ENCODE measurements at regions of chr9 and their contacts with region 1.

Region 1: GRCh38 chr9:128412120-128412790 is 8.4 kb upstream of the CERCAM start:
- DNase-seq: no peak
- ATAC-seq: peak; percentile 38; the same call in 1 of the 2 replicates
- H3K4me3 ChIP-seq: no peak overlapping the region
- H3K27ac ChIP-seq: no peak overlapping the region
- H3K4me1 ChIP-seq: peaks cover 4% of the 10 kb centered on the region; the same call in 1 of the 2 replicates
- H3K27me3 ChIP-seq: no peaks in the 10 kb centered on the region
- CTCF ChIP-seq: peak; percentile 80

Region 2: DNA sequence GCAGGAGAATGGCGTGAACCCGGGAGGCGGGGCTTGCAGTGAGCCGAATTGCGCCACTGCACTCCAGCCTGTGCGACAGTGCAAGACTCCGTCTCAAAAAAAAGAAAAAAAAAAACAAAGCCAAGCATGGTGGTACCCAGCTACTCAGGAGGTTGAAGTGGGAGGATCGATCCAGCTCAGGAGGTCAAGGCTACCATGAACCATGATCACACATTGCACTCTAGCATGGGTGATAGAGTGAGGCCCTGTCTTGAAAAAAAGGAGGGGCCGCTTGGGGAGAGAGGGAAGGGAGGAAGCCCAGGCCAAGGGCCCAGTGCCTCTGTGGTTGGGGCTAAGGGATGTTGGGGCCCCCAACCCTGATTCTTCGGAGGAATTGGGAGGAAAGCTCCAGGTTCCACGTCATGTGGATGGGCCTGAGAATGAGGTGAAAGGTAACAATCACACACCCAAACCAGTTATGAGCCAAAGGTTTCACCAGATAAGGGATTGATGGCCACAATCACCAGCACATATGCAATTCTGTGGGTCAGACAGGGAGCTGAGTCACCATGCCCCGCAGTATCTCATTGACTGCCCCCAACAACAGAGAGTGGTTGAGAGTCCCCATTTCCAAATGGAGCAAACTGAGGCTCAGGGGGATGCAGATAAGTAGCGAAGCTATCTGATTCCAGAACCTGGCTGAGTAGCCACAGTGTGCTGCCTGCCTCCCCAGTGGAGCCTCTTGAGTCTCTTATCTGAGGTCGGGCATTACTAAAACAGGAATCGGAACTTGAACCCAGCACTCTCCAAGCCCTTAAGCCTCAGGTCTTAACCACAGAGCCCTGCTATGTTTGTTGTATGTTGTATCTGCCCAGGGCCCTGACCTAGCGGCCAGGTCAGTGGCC is 115.7 kb before region 1 on chr9:
- CTCF ChIA-PET with region 1: interaction called, 5 read pairs
- POLR2A ChIA-PET with region 1: no interaction called
- in situ Hi-C with region 1: no loop called
- intact Hi-C with region 1: loop called (anchors 10 kb)
- DNase-seq: no peak
- ATAC-seq: no peak
- H3K4me3 ChIP-seq: no peak overlapping the region
- H3K27ac ChIP-seq: no peak overlapping the region
- H3K4me1 ChIP-seq: peaks cover 3% of the 10 kb centered on the region
- H3K27me3 ChIP-seq: no peaks in the 10 kb centered on the region
- CTCF ChIP-seq: no peak

Region 3: GRCh38 chr9:128309551-128309950 is 102.7 kb before region 1 on chr9:
- CTCF ChIA-PET with region 1: interaction called, 12 read pairs
- POLR2A ChIA-PET with region 1: no interaction called
- in situ Hi-C with region 1: no loop called
- intact Hi-C with region 1: no loop called
- DNase-seq: no peak
- ATAC-seq: no peak
- H3K4me3 ChIP-seq: no peak overlapping the region
- H3K27ac ChIP-seq: no peak overlapping the region
- H3K4me1 ChIP-seq: no peaks in the 10 kb centered on the region
- H3K27me3 ChIP-seq: no peaks in the 10 kb centered on the region
- CTCF ChIP-seq: no peak

Region 4: GRCh38 chr9:128361986-128362646 is 50.1 kb before region 1 on chr9:
- CTCF ChIA-PET with region 1: interaction called, 6 read pairs
- POLR2A ChIA-PET with region 1: no interaction called
- in situ Hi-C with region 1: no loop called
- intact Hi-C with region 1: loop called (anchors 1 kb)
- DNase-seq: peak; percentile 42
- ATAC-seq: peak; percentile 94
- H3K4me3 ChIP-seq: peak overlapping the region; percentile 36 to 58
- H3K27ac ChIP-seq: peak overlapping the region; percentile 39; the same call in 1 of the 2 replicates
- H3K4me1 ChIP-seq: peaks cover 3% of the 10 kb centered on the region; the same call in 1 of the 2 replicates
- H3K27me3 ChIP-seq: no peaks in the 10 kb centered on the region
- CTCF ChIP-seq: peak; percentile 87

Region 5: DNA sequence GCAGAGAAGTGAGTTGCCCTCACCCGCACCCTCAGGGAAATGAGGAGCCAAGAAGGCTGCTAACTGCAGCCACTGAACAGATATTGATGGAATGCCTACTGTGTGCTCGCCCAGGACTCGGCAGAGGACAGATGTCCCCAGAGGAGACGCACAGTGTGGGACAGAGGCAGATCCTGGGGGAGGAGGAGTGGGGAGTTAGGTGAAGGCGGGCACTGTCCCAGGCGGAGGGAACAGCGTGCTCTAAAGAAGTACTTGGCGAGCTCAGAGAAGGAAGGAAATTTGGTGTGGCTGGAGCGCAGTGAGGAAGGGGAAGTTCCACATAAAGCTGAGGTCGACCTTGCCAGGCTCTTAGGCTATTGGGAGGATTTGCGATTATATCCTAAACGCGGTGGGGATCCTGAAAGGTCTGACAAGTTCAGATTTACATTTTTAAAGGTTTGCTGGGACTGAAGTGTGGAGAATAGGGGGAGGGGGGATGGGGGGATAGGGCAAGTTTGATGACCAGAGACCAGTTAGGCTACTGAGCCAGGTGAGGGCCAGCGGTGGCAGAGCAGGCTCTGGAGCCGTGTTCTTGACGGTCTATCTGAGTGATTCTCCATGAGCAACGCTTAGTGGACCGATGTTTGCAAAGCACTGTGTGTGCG is 15.2 kb before region 1 on chr9:
- CTCF ChIA-PET with region 1: no interaction called
- POLR2A ChIA-PET with region 1: interaction called, 12 read pairs
- in situ Hi-C with region 1: no loop called
- intact Hi-C with region 1: no loop called
- DNase-seq: no peak
- ATAC-seq: peak; percentile 53; the same call in 1 of the 2 replicates
- H3K4me3 ChIP-seq: no peak overlapping the region
- H3K27ac ChIP-seq: no peak overlapping the region
- H3K4me1 ChIP-seq: no peaks in the 10 kb centered on the region
- H3K27me3 ChIP-seq: no peaks in the 10 kb centered on the region
- CTCF ChIP-seq: no peak